ENCODE measurements at regions of chr15 and their contacts with region 1.

Region 1: GRCh38 chr15:92797168-92797951 is 102.8 kb upstream of the CHD2 start:
- DNase-seq: peak; percentile 53
- H3K4me3 Mint-ChIP-seq: no peak overlapping the region
- H3K27ac Mint-ChIP-seq: peak overlapping the region; percentile 19
- H3K4me1 Mint-ChIP-seq: peaks cover 11% of the 10 kb centered on the region
- H3K27me3 Mint-ChIP-seq: no peaks in the 10 kb centered on the region

Region 2: GRCh38 chr15:92683232-92683834 is 114.0 kb before region 1 on chr15:
- CTCF ChIA-PET with region 1: no interaction called
- intact Hi-C with region 1: no loop called
- DNase-seq: peak; percentile 8
- H3K4me3 Mint-ChIP-seq: no peak overlapping the region
- H3K27ac Mint-ChIP-seq: no peak overlapping the region
- H3K4me1 Mint-ChIP-seq: no peaks in the 10 kb centered on the region
- H3K27me3 Mint-ChIP-seq: peaks cover 3% of the 10 kb centered on the region

Region 3: GRCh38 chr15:92881802-92882696 is 84.7 kb after region 1 on chr15:
- CTCF ChIA-PET with region 1: interaction called, 10 read pairs
- intact Hi-C with region 1: no loop called
- DNase-seq: peak; percentile 100
- H3K4me3 Mint-ChIP-seq: peak overlapping the region; percentile 95
- H3K27ac Mint-ChIP-seq: peak overlapping the region; percentile 98
- H3K4me1 Mint-ChIP-seq: peaks cover 51% of the 10 kb centered on the region
- H3K27me3 Mint-ChIP-seq: no peaks in the 10 kb centered on the region

Region 4: GRCh38 chr15:93018580-93018979 is 221.2 kb after region 1 on chr15:
- CTCF ChIA-PET with region 1: interaction called, 12 read pairs
- intact Hi-C with region 1: no loop called
- DNase-seq: no peak
- H3K4me3 Mint-ChIP-seq: no peak overlapping the region
- H3K27ac Mint-ChIP-seq: peak overlapping the region; percentile 65
- H3K4me1 Mint-ChIP-seq: peaks cover 69% of the 10 kb centered on the region
- H3K27me3 Mint-ChIP-seq: no peaks in the 10 kb centered on the region

Region 5: DNA sequence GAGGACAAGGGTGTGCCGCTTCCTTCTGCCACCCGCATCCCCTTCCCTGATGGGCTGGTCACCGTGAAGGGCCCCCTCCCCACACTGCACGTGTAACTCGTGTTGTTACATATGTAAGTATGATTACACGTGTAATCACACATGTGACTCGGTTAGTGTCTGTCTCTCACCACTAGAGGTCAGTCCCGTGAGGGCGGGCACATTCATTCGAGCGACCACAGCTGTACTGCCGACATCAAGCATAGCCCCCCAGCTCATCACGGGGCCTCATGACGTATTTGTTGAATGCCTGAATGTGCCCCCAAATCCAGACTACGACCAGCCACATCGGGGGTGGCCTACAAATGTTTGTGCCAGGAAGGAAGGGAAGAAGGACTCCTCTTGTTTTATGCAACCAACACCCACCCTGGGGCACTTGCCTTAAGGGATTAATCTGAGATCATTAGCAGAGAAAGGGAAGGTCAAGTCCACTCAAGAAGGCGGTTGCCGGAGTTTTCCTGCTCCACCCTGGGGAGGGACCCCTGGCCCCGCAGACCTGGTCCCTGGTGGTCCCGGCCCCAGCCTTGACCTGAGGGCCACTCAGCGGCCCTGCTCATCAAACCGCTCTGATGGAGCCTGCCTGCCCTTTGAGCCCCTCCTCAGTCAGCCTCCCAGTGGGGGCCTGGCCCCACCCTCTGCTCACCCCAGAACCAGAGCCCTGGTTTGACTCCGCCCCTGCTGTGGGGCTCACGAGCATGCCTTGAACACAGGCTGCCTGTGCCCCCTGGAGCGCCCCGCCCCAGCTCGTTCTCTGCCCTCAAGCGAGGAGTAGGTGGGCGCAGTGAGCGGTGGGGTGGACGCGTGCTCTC is 238.8 kb after region 1 on chr15:
- CTCF ChIA-PET with region 1: interaction called, 40 read pairs
- intact Hi-C with region 1: no loop called
- DNase-seq: peak; percentile 67
- H3K4me3 Mint-ChIP-seq: no peak overlapping the region
- H3K27ac Mint-ChIP-seq: no peak overlapping the region
- H3K4me1 Mint-ChIP-seq: peaks cover 5% of the 10 kb centered on the region
- H3K27me3 Mint-ChIP-seq: no peaks in the 10 kb centered on the region

Region 6: GRCh38 chr15:94119923-94120775 is 1322.8 kb after region 1 on chr15:
- CTCF ChIA-PET with region 1: no interaction called
- intact Hi-C with region 1: loop called (anchors 1 kb)
- DNase-seq: peak; percentile 75
- H3K4me3 Mint-ChIP-seq: no peak overlapping the region
- H3K27ac Mint-ChIP-seq: no peak overlapping the region
- H3K4me1 Mint-ChIP-seq: no peaks in the 10 kb centered on the region
- H3K27me3 Mint-ChIP-seq: no peaks in the 10 kb centered on the region